Caco-2 (cell line): ENCODE measurements at regions of chr4 and their contacts with region 1.

Region 1: DNA sequence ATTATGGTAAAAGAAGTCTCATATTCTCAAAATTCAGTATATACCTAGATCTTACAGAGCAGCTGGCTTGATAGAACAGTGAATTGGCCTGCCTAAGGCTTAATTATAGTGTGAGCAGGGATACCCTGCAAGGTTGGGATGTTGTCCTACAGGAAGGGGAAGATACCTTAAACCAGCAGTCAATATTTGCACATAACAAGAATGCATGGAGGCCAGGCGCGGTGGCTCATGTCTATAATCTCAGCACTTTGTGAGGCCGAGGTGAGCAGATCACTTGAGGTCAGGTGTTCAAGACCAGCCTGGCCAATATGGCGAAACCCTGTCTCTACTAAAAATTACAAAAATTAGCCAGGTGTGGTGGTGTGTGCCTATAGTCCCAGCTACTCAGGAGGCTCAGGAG is 58.7 kb upstream of the ABCG2 start:
- DNase-seq: peak; percentile 14 to 49
- H3K4me3 ChIP-seq: no peak overlapping the region
- H3K4me3 Mint-ChIP-seq: no peak overlapping the region
- H3K27ac Mint-ChIP-seq: no peak overlapping the region
- H3K4me1 ChIP-seq: peaks cover 10% of the 10 kb centered on the region
- H3K4me1 Mint-ChIP-seq: peaks cover 21% of the 10 kb centered on the region
- H3K27me3 ChIP-seq: no peaks in the 10 kb centered on the region
- H3K27me3 Mint-ChIP-seq: no peaks in the 10 kb centered on the region
- CTCF ChIP-seq: no peak

Region 2: DNA sequence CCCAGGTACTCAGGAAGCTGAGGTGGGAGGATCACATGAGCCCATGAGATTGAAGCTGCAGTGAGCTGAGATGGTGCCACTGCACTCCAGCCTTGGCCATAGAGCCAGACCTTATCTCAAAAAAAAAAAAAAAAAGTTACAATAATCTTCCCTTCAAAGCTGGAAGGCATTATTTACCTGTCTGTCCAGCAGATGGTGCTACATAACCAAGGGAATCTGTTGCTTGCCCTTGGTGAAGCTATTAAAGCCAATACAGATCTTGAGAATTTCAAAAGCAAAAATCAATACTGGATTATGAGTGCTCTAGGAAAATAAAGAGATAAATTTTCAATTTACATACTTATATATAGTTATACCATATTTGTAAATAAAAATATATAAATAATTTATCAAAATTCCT is 183.9 kb before region 1 on chr4:
- CTCF ChIA-PET with region 1: interaction called, 34 read pairs
- POLR2A ChIA-PET with region 1: no interaction called
- intact Hi-C with region 1: loop called (anchors 1 kb)
- DNase-seq: peak; percentile 58 to 70
- H3K4me3 ChIP-seq: no peak overlapping the region
- H3K4me3 Mint-ChIP-seq: no peak overlapping the region
- H3K27ac Mint-ChIP-seq: no peak overlapping the region
- H3K4me1 ChIP-seq: no peaks in the 10 kb centered on the region
- H3K4me1 Mint-ChIP-seq: no peaks in the 10 kb centered on the region
- H3K27me3 ChIP-seq: no peaks in the 10 kb centered on the region
- H3K27me3 Mint-ChIP-seq: no peaks in the 10 kb centered on the region
- CTCF ChIP-seq: peak; percentile 68

Region 3: GRCh38 chr4:88573995-88574394 is 356.8 kb after region 1 on chr4:
- CTCF ChIA-PET with region 1: no interaction called
- POLR2A ChIA-PET with region 1: no interaction called
- intact Hi-C with region 1: no loop called
- DNase-seq: peak in 1 of 2 experiments; percentile 29
- H3K4me3 ChIP-seq: no peak overlapping the region
- H3K4me3 Mint-ChIP-seq: no peak overlapping the region
- H3K27ac Mint-ChIP-seq: no peak overlapping the region
- H3K4me1 ChIP-seq: peaks cover 4% of the 10 kb centered on the region
- H3K4me1 Mint-ChIP-seq: peaks cover 7% of the 10 kb centered on the region
- H3K27me3 ChIP-seq: no peaks in the 10 kb centered on the region
- H3K27me3 Mint-ChIP-seq: peaks cover 4% of the 10 kb centered on the region
- CTCF ChIP-seq: no peak